ENCODE measurements at regions of chr20 and their contacts with region 1.

Region 1: GRCh38 chr20:53660078-53660909 is 66.7 kb upstream of the ZNF217 start:
- DNase-seq: no peak
- H3K4me3 Mint-ChIP-seq: peak overlapping the region; percentile 77
- H3K27ac Mint-ChIP-seq: peak overlapping the region; percentile 84
- H3K4me1 Mint-ChIP-seq: peaks cover 55% of the 10 kb centered on the region
- H3K27me3 Mint-ChIP-seq: no peaks in the 10 kb centered on the region

Region 2: GRCh38 chr20:53609491-53610445 is 50.5 kb before region 1 on chr20:
- intact Hi-C with region 1: loop called (anchors 2 kb)
- DNase-seq: peak; percentile 72
- H3K4me3 Mint-ChIP-seq: peak overlapping the region; percentile 82
- H3K27ac Mint-ChIP-seq: peak overlapping the region; percentile 97
- H3K4me1 Mint-ChIP-seq: peaks cover 33% of the 10 kb centered on the region
- H3K27me3 Mint-ChIP-seq: no peaks in the 10 kb centered on the region

Region 3: GRCh38 chr20:53623454-53624211 is 36.7 kb before region 1 on chr20:
- intact Hi-C with region 1: loop called (anchors 5 kb)
- DNase-seq: peak; percentile 32
- H3K4me3 Mint-ChIP-seq: peak overlapping the region; percentile 73
- H3K27ac Mint-ChIP-seq: peak overlapping the region; percentile 95
- H3K4me1 Mint-ChIP-seq: peaks cover 37% of the 10 kb centered on the region
- H3K27me3 Mint-ChIP-seq: no peaks in the 10 kb centered on the region

Region 4: DNA sequence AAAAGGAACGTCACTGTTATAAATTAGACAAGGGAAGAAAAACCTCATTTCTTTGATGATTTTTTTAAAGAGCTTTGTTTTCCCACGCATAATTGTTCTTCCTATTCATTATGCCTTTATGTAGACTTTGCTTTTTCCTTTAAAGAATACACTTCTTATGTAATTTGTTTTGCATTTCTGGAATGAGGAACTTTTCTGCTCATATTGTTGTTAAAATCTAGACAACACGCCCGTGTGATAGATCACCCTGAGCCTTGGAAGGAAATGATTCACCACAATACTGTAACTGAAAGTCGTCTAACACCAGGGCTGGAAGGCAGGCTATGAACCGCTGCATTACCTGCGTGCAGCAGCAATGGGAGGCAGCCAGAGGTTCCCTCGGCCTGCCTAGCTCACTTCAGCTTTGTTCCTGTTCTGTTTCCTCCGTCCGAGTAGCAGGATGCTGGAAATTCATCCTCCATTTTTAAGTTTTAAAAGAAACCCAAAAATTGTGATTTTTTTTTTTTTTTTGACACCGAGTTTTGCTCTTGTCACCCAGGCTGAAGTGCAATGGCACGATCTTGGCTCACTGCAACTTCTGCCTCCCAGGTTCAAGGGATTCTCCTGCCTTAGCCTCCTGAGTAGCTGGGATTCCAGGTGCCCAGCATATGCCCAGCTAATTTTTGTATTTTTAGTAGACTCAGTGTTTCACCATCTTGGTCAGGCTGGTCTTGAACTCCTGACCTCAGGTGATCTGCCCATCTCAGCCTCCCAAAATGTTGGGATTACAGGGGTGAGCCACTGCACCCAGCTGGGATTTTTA is 17.1 kb before region 1 on chr20:
- intact Hi-C with region 1: loop called (anchors 1 kb)
- DNase-seq: peak; percentile 67
- H3K4me3 Mint-ChIP-seq: peak overlapping the region; percentile 76
- H3K27ac Mint-ChIP-seq: peak overlapping the region; percentile 95
- H3K4me1 Mint-ChIP-seq: peaks cover 33% of the 10 kb centered on the region
- H3K27me3 Mint-ChIP-seq: no peaks in the 10 kb centered on the region

Region 5: GRCh38 chr20:53677447-53678314 is 17.4 kb after region 1 on chr20:
- intact Hi-C with region 1: no loop called
- DNase-seq: no peak
- H3K4me3 Mint-ChIP-seq: peak overlapping the region; percentile 48
- H3K27ac Mint-ChIP-seq: peak overlapping the region; percentile 89
- H3K4me1 Mint-ChIP-seq: peaks cover 26% of the 10 kb centered on the region
- H3K27me3 Mint-ChIP-seq: no peaks in the 10 kb centered on the region

Region 6: GRCh38 chr20:53691060-53691810 is 30.9 kb after region 1 on chr20:
- intact Hi-C with region 1: loop called (anchors 1 kb)
- DNase-seq: no peak
- H3K4me3 Mint-ChIP-seq: no peak overlapping the region
- H3K27ac Mint-ChIP-seq: peak overlapping the region; percentile 0
- H3K4me1 Mint-ChIP-seq: peaks cover 35% of the 10 kb centered on the region
- H3K27me3 Mint-ChIP-seq: no peaks in the 10 kb centered on the region

Region 7: GRCh38 chr20:53718142-53719021 is 58.1 kb after region 1 on chr20:
- intact Hi-C with region 1: no loop called
- DNase-seq: no peak
- H3K4me3 Mint-ChIP-seq: no peak overlapping the region
- H3K27ac Mint-ChIP-seq: no peak overlapping the region
- H3K4me1 Mint-ChIP-seq: peaks cover 15% of the 10 kb centered on the region
- H3K27me3 Mint-ChIP-seq: no peaks in the 10 kb centered on the region

Region 8: DNA sequence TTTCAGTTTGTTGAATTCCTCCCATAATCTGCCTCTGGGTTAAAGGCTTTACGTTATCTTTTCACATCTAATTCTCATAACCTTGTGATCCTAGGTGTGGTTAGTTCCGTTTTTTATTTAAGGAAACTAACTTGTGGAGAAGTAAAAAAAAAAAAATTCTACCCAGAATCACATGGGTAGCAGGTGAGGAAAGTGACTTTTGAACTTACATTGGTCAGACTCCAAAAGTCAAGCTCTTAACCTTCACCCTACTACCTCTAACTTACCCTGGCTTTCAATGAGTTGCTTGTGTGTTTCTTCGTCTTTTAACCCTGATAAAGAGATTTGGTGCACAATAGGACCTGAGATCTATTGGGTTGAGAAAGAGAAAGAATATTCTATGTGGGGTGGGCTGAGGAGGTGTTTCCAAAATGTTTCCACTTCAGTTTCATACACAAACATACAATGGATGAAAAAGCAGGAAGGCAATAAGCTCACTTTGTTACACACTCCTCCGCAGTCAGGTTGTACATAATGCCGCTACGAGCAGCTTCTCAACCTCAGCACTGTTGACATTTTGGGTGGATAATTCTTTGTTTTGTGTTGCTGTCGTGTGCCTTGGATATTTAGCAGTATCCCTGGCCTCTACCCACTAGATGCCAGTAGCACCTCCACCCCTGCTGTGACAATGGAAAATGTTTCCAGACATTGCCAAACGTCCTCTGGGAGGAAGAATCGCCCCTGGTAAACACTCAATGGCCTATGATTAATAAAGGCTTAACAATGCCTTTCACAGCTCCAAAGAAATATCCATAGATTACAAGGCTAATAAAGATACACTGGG is 126.4 kb after region 1 on chr20:
- intact Hi-C with region 1: no loop called
- DNase-seq: no peak
- H3K4me3 Mint-ChIP-seq: no peak overlapping the region
- H3K27ac Mint-ChIP-seq: no peak overlapping the region
- H3K4me1 Mint-ChIP-seq: peaks cover 30% of the 10 kb centered on the region
- H3K27me3 Mint-ChIP-seq: no peaks in the 10 kb centered on the region

Region 9: DNA sequence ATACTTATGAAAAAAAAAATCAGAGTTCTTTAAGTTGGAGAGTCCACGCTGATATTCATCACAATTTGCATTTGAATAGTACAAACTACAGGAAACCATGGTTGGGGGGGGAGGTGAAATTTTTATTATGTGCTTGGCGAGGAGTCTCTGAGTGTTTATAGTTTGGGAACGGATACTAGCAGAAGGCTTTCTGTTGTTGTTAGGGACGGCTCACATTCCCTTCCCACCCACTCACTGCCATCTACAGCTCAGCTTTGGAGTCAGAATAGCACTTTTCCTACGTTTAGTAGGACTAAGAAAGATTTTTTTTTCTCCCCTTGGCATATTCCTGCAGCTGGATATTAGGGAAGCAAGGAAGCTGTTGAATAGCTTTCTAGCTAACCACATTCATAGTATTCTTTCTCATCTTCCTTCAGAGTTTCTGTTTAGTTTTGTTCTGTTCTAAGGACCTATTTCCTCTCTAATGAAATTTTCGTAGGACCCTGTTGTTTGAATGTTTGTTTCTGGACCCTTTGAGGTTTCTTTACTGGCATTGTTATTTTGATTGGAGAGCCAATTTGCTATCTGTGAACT is 168.5 kb after region 1 on chr20:
- intact Hi-C with region 1: no loop called
- DNase-seq: no peak
- H3K4me3 Mint-ChIP-seq: peak overlapping the region; percentile 80
- H3K27ac Mint-ChIP-seq: peak overlapping the region; percentile 95
- H3K4me1 Mint-ChIP-seq: peaks cover 47% of the 10 kb centered on the region
- H3K27me3 Mint-ChIP-seq: no peaks in the 10 kb centered on the region